ENCODE measurements at regions of chr5 and their contacts with region 1.

Region 1: GRCh38 chr5:20972419-20972925 is 984.5 kb upstream of the CDH18 start:
- DNase-seq: no peak
- ATAC-seq: peak; percentile 75
- H3K4me3 Mint-ChIP-seq: peak overlapping the region; percentile 87
- H3K27ac Mint-ChIP-seq: peak overlapping the region; percentile 50
- H3K4me1 Mint-ChIP-seq: peaks cover 11% of the 10 kb centered on the region
- H3K27me3 Mint-ChIP-seq: no peaks in the 10 kb centered on the region
- CTCF ChIP-seq: no peak

Region 2: GRCh38 chr5:21058289-21058688 is 85.8 kb after region 1 on chr5:
- CTCF ChIA-PET with region 1: no interaction called
- POLR2A ChIA-PET with region 1: no interaction called
- intact Hi-C with region 1: loop called (anchors 5 kb)
- DNase-seq: no peak
- ATAC-seq: peak; percentile 96
- H3K4me3 Mint-ChIP-seq: peak overlapping the region; percentile 85
- H3K27ac Mint-ChIP-seq: peak overlapping the region; percentile 88
- H3K4me1 Mint-ChIP-seq: peaks cover 51% of the 10 kb centered on the region
- H3K27me3 Mint-ChIP-seq: no peaks in the 10 kb centered on the region
- CTCF ChIP-seq: no peak

Region 3: DNA sequence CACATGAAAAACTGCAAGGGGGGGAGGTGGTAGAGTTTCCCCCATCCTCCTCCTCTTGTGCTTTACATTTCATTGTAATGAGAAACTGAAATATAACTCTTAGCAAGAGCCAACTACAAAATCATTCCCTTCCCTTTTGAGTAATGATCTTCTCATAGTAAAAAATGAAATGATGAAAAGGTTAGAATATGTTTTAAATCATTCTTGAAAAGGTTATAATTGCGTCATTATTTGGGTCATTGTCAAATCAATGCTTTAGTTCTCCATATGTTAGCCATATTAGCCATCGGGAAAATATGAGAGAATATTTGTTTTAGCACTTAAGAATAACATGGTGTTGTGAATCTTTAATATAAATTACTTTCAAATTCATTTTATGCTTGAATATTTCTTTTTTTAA is 200.6 kb after region 1 on chr5:
- CTCF ChIA-PET with region 1: no interaction called
- POLR2A ChIA-PET with region 1: no interaction called
- intact Hi-C with region 1: loop called (anchors 1 kb)
- DNase-seq: no peak
- ATAC-seq: no peak
- H3K4me3 Mint-ChIP-seq: no peak overlapping the region
- H3K27ac Mint-ChIP-seq: no peak overlapping the region
- H3K4me1 Mint-ChIP-seq: no peaks in the 10 kb centered on the region
- H3K27me3 Mint-ChIP-seq: no peaks in the 10 kb centered on the region
- CTCF ChIP-seq: no peak

Region 4: DNA sequence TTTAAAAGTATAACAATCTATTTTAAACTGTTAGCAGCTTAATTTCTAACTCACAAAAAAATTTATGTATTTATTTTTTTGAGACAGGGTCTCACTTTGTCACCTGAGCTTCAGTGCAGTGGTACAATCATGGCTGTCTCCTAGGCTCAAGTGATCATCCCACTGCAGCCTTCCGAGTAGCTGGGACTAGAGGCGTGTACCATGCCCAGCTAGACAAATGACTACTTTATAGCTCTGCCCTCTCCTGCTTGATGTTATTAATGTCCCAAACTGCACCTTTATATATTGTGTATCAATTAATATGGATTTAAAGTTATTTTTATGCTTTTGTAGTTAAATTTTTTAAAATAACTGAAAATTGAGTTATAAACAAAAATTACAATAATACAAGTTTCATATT is 219.3 kb after region 1 on chr5:
- CTCF ChIA-PET with region 1: interaction called, 4 read pairs
- POLR2A ChIA-PET with region 1: no interaction called
- intact Hi-C with region 1: loop called (anchors 5 kb)
- DNase-seq: no peak
- ATAC-seq: no peak
- H3K4me3 Mint-ChIP-seq: no peak overlapping the region
- H3K27ac Mint-ChIP-seq: no peak overlapping the region
- H3K4me1 Mint-ChIP-seq: no peaks in the 10 kb centered on the region
- H3K27me3 Mint-ChIP-seq: no peaks in the 10 kb centered on the region
- CTCF ChIP-seq: no peak

Measured in activated B cell treated with CpG ODN at 0.5 μM for 24 hours (primary cell).